ENCODE measurements at regions of chr6 and their contacts with region 1.

Region 1: GRCh38 chr6:20411953-20412681 is 10.4 kb downstream of the E2F3 start:
- DNase-seq: no peak
- H3K4me3 ChIP-seq: no peak overlapping the region
- H3K27ac ChIP-seq: no peak overlapping the region
- H3K4me1 ChIP-seq: no peaks in the 10 kb centered on the region
- H3K27me3 ChIP-seq: no peaks in the 10 kb centered on the region
- CTCF ChIP-seq: no peak

Region 2: DNA sequence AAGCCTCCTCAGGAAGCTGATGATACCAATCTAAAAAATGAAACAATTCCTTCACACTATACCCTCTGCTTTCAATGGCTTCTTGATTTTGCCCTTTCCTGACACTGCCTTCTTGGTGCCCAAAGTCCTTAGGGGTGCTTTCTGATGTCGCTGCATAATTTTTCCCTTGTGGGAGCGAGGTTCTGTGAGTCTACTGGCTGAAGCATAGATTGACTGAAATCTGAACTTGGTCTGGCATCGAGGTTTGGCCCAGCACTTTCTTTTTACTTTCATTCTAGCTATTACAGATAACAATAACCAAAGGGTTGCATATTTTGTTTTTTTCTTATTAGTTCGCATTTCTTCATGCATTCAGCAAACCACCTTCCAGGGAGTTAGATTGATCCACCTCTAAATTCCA is 55.3 kb after region 1 on chr6:
- CTCF ChIA-PET with region 1: no interaction called
- dilution Hi-C with region 1: loop called (anchors 5 kb)
- in situ Hi-C with region 1: no loop called
- intact Hi-C with region 1: no loop called
- DNase-seq: no peak
- H3K4me3 ChIP-seq: no peak overlapping the region
- H3K27ac ChIP-seq: no peak overlapping the region
- H3K4me1 ChIP-seq: peaks cover 9% of the 10 kb centered on the region
- H3K27me3 ChIP-seq: no peaks in the 10 kb centered on the region
- CTCF ChIP-seq: no peak

Region 3: GRCh38 chr6:20582586-20583446 is 170.7 kb after region 1 on chr6:
- CTCF ChIA-PET with region 1: no interaction called
- dilution Hi-C with region 1: no loop called
- in situ Hi-C with region 1: no loop called
- intact Hi-C with region 1: no loop called
- DNase-seq: no peak
- H3K4me3 ChIP-seq: no peak overlapping the region
- H3K27ac ChIP-seq: no peak overlapping the region
- H3K4me1 ChIP-seq: no peaks in the 10 kb centered on the region
- H3K27me3 ChIP-seq: no peaks in the 10 kb centered on the region
- CTCF ChIP-seq: no peak

Region 4: GRCh38 chr6:21079468-21080048 is 667.4 kb after region 1 on chr6:
- CTCF ChIA-PET with region 1: no interaction called
- dilution Hi-C with region 1: no loop called
- in situ Hi-C with region 1: no loop called
- intact Hi-C with region 1: no loop called
- DNase-seq: no peak
- H3K4me3 ChIP-seq: no peak overlapping the region
- H3K27ac ChIP-seq: no peak overlapping the region
- H3K4me1 ChIP-seq: no peaks in the 10 kb centered on the region
- H3K27me3 ChIP-seq: no peaks in the 10 kb centered on the region
- CTCF ChIP-seq: no peak